ENCODE measurements at regions of chr1 and their contacts with region 1.

Region 1: DNA sequence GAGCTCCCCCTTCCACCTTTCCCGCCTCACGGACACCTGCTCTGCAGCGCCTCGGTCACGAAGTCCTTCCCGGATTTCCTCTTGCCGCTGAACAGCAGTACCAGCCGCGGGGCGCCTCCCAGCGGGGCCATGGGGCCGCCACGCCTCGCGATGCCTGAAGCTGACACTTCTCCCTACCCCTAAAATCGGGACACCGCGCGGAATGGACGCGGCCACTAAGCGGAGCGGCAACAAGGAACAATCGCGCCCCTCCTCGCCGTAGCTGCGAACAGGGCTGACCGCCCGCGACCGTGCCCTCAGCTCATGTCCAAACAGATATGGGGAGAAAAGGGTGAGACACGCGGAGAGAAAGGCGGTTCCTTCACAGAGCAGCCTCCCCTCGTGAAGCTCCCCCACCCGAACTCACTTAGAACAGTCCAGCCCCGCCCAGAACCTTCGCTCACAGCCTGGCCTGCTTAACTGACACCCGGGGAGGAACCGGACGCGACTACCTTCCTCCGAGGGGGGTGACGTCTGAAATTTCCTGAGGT is at the start of gene PMVK:
- DNase-seq: peak; percentile 98
- H3K4me3 Mint-ChIP-seq: peak within 1 kb of the TSS; percentile 91
- H3K27ac Mint-ChIP-seq: peak within 1 kb of the TSS; percentile 91
- H3K4me1 Mint-ChIP-seq: peaks cover 46% of the 10 kb centered on the region
- H3K27me3 Mint-ChIP-seq: no peaks in the 10 kb centered on the region
- total RNA-seq, gene PMVK: 47.4 and 47.7 TPM in 2 replicates

Region 2: GRCh38 chr1:154755858-154756730 is 180.5 kb before region 1 on chr1:
- intact Hi-C with region 1: loop called (anchors 2 kb)
- DNase-seq: peak; percentile 69
- H3K4me3 Mint-ChIP-seq: peak overlapping the region; percentile 14
- H3K27ac Mint-ChIP-seq: peak overlapping the region; percentile 88
- H3K4me1 Mint-ChIP-seq: peaks cover 72% of the 10 kb centered on the region
- H3K27me3 Mint-ChIP-seq: no peaks in the 10 kb centered on the region

Region 3: DNA sequence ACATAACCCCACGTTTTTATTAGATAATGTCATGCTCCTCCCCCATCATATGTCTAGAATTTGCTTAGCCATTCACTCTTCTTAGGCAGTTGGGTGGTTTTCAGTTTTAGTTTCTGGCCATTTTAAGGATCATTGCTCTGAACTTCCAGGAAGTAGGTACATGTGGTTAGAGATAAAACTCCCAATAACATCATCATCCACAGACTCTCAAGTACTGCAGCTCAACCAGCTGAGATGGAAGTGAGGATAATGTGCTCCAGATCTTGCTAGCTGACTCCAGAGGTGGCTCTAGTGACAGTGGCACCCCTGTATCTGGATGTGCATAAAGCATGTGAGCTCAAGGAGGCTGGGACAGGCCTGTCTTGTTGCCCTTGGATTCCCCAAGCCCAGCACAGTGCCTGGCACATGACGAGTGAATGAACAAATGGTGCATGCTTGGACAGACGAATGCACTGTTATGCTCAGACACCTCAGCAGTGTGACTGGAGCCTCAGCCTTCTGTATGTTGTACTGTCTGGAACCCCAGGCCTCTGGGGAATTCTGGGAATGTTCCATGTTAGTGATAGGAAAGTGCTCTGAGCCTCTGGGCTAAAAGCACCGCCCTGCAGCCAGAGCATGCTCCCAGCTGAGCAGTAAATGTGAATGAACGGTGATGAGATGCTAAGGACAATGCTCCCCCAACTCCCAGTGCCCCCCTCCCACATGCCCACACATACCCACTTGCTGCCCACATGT is 50.2 kb before region 1 on chr1:
- intact Hi-C with region 1: loop called (anchors 1 kb)
- DNase-seq: peak; percentile 65
- H3K4me3 Mint-ChIP-seq: peak overlapping the region; percentile 16
- H3K27ac Mint-ChIP-seq: peak overlapping the region; percentile 46
- H3K4me1 Mint-ChIP-seq: peaks cover 23% of the 10 kb centered on the region
- H3K27me3 Mint-ChIP-seq: peaks cover 4% of the 10 kb centered on the region

Region 4: DNA sequence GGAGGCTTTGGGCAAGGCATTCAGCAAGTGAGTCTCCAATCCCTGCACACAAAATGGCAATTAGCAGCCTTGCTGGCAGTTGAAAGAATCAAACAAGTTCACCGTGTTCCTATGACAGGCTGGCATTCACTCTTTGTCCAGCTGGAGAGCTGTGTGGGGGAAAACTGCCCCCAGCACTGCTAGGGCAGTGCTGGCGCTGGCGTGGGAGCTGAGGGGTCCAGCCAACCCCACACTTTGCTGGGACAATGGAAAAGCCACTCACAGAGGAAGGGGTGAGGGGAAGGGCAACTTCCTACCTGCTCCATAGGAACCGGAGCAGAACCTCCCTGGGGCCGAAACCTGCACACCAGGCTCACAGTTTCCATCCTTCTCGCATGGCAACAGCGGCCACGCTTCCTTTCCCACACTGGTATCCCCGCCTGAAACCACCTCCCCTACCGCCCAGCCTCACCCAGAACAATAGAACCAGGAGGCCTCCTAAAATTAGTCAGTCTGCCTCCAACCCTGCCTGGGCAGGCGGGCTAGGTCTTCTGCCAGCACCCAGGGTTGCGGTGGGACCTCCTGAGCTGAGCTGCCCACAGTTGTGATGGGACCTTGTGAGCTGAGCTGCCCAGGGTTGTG is 39.7 kb before region 1 on chr1:
- intact Hi-C with region 1: no loop called
- DNase-seq: no peak
- H3K4me3 Mint-ChIP-seq: no peak overlapping the region
- H3K27ac Mint-ChIP-seq: no peak overlapping the region
- H3K4me1 Mint-ChIP-seq: no peaks in the 10 kb centered on the region
- H3K27me3 Mint-ChIP-seq: peaks cover 2% of the 10 kb centered on the region

Region 5: GRCh38 chr1:154955718-154956543 is 19.3 kb after region 1 on chr1 and contains the start of gene PBXIP1:
- intact Hi-C with region 1: loop called (anchors 1 kb)
- DNase-seq: peak; percentile 97
- H3K4me3 Mint-ChIP-seq: peak within 1 kb of the TSS; percentile 87
- H3K27ac Mint-ChIP-seq: peak within 1 kb of the TSS; percentile 96
- H3K4me1 Mint-ChIP-seq: peaks cover 63% of the 10 kb centered on the region
- H3K27me3 Mint-ChIP-seq: no peaks in the 10 kb centered on the region
- total RNA-seq, gene PBXIP1: 19.3 and 21.6 TPM in 2 replicates

Region 6: DNA sequence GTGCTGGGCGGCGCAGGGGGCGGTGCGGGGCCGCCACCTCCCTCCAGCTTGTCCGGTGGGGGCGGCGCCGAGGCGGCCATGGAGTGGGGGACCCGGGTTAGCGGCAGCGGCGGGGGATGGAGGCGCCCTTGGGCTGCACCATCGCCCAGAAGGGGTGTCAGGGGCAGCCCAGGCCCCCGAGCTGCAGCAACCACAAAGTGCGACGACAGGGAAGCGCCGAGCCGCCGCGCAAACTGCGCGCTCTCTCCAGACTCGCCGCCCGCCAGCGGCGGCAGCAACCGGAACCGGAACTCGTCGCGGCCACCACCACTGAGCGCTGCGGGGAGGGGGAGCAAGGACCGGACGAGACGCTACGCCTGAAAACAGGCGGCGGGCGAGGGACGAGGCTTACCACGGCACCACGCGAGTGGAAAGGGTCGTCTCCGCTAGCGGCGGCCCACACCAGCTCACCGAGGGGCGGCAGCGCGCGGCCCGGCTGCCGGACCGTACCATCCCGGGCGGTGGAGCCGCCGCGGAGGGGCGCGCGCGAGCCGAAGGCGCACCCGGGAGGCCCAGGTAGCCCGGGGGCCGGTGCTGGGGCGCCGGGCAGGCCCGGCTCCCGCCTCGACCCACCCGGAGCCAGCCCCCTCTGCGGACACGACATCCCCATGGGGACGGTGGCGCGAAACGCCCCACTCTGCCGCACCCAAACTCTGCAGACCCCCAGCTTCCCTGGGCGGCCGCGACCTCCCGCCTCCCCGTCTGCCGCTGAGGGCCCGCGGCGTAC is 25.1 kb after region 1 on chr1 and contains the start of gene PYGO2:
- intact Hi-C with region 1: loop called (anchors 1 kb)
- DNase-seq: peak; percentile 96
- H3K4me3 Mint-ChIP-seq: peak within 1 kb of the TSS; percentile 96
- H3K27ac Mint-ChIP-seq: peak within 1 kb of the TSS; percentile 89
- H3K4me1 Mint-ChIP-seq: peaks cover 26% of the 10 kb centered on the region
- H3K27me3 Mint-ChIP-seq: no peaks in the 10 kb centered on the region
- total RNA-seq, gene PYGO2: 34.4 and 34.8 TPM in 2 replicates

Region 7: GRCh38 chr1:154974063-154974807 is 37.6 kb after region 1 on chr1 and contains the start of gene CKS1B:
- intact Hi-C with region 1: loop called (anchors 2 kb)
- DNase-seq: peak; percentile 98
- H3K4me3 Mint-ChIP-seq: no peak within 1 kb of the TSS
- H3K27ac Mint-ChIP-seq: no peak within 1 kb of the TSS
- H3K4me1 Mint-ChIP-seq: peaks cover 39% of the 10 kb centered on the region
- H3K27me3 Mint-ChIP-seq: no peaks in the 10 kb centered on the region
- total RNA-seq, gene CKS1B: 179 and 181 TPM in 2 replicates

Region 8: GRCh38 chr1:155017041-155017945 is 80.7 kb after region 1 on chr1:
- intact Hi-C with region 1: loop called (anchors 1 kb)
- DNase-seq: peak; percentile 96
- H3K4me3 Mint-ChIP-seq: peak overlapping the region; percentile 78
- H3K27ac Mint-ChIP-seq: peak overlapping the region; percentile 37
- H3K4me1 Mint-ChIP-seq: peaks cover 52% of the 10 kb centered on the region
- H3K27me3 Mint-ChIP-seq: no peaks in the 10 kb centered on the region

Region 9: GRCh38 chr1:155063550-155064110 is 127.0 kb after region 1 on chr1 and contains the start of gene EFNA4:
- intact Hi-C with region 1: no loop called
- DNase-seq: peak; percentile 96
- H3K4me3 Mint-ChIP-seq: peak within 1 kb of the TSS; percentile 80
- H3K27ac Mint-ChIP-seq: peak within 1 kb of the TSS; percentile 54
- H3K4me1 Mint-ChIP-seq: peaks cover 23% of the 10 kb centered on the region
- H3K27me3 Mint-ChIP-seq: no peaks in the 10 kb centered on the region
- total RNA-seq, gene EFNA4: 5.8 and 6.2 TPM in 2 replicates

Region 10: DNA sequence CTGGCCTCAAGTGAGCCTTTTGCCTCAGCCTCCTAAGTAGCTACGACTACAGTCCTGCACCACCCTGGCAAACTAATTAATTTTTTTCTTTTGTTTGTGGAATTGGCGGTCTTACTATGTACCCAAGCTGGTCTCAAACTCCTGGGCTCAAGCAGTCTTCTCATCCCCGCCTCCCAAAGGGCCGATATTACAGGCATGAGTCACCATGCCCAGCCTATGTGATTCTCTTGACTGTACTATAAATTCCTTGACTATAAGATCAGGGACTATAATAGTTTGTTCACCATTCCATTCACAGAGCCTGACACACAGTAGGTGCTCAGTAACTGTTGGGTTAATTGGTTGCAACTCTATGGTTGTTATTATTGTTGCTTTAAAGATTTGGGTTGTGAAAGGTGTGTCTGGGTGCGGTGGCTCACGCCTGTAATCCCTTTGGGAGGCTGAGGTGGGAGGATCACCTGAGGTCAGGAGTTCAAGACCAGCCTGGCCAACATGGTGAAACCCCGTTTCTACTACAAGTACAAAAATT is 769.5 kb after region 1 on chr1:
- intact Hi-C with region 1: no loop called
- DNase-seq: no peak
- H3K4me3 Mint-ChIP-seq: no peak overlapping the region
- H3K27ac Mint-ChIP-seq: no peak overlapping the region
- H3K4me1 Mint-ChIP-seq: peaks cover 20% of the 10 kb centered on the region
- H3K27me3 Mint-ChIP-seq: no peaks in the 10 kb centered on the region